ENCODE measurements at regions of chr19 and their contacts with region 1.

Region 1: GRCh38 chr19:3046698-3047424 is 15.4 kb downstream of the TLE5 start:
- DNase-seq: no peak
- CTCF ChIP-seq: no peak

Region 2: GRCh38 chr19:2610637-2611482 is 436.0 kb before region 1 on chr19:
- CTCF ChIA-PET with region 1: no interaction called
- POLR2A ChIA-PET with region 1: no interaction called
- DNase-seq: peak; percentile 72
- CTCF ChIP-seq: peak; percentile 99

Region 3: GRCh38 chr19:3035542-3036118 is 11.2 kb before region 1 on chr19:
- CTCF ChIA-PET with region 1: interaction called, 11 read pairs
- POLR2A ChIA-PET with region 1: interaction called, 4 read pairs
- DNase-seq: peak; percentile 100
- CTCF ChIP-seq: no peak

Region 4: GRCh38 chr19:3082331-3082730 is 35.5 kb after region 1 on chr19:
- CTCF ChIA-PET with region 1: no interaction called
- POLR2A ChIA-PET with region 1: no interaction called
- DNase-seq: no peak
- CTCF ChIP-seq: no peak

Region 5: GRCh38 chr19:4567584-4568071 is 1520.8 kb after region 1 on chr19:
- CTCF ChIA-PET with region 1: no interaction called
- POLR2A ChIA-PET with region 1: no interaction called
- DNase-seq: no peak
- CTCF ChIP-seq: peak; percentile 62

Measured in GM10248 (cell line).